OCI-LY7 (cell line): ENCODE measurements at regions of chr2 and their contacts with region 1.

Region 1: DNA sequence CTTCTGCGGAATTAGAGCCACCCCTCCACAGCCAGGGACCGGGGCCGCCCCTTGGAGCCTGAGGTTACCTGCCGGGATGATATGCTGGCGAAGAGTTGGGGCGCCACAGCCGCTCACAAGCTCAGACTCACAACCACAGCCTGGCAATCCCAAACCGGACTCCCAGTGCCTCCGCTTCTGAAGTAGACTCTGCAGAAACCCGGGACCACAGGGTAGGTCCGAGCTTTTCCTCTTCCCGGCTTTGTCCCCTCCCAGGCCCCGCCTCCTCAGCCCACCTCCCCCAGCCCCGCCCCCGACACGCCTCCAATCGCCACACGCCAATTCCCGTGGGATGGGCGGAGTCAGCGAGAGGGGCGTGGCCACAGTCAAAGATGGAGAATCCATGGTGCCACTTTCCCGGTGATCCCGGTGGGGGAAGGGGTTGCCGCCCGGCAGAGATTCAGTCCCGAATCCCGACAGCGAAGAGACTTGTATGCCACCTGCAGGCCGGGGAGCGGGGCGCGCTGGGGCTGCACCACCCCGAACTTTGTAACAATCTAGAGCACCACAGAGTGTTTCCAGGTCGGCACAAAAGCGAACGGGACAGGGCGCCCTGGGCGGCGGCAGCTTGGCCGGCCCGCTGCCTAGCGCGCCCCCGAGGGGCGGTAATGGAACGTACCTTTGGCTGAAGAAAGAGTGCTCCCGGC is at the start of gene IDH1:
- DNase-seq: peak; percentile 91
- H3K4me3 ChIP-seq: peak within 1 kb of the TSS; percentile 77
- H3K27ac ChIP-seq: peak within 1 kb of the TSS; percentile 65
- H3K4me1 ChIP-seq: peaks cover 38% of the 10 kb centered on the region
- CTCF ChIP-seq: peak; percentile 81
- total RNA-seq, gene IDH1: 28.2 and 36.2 TPM in 2 replicates

Region 2: DNA sequence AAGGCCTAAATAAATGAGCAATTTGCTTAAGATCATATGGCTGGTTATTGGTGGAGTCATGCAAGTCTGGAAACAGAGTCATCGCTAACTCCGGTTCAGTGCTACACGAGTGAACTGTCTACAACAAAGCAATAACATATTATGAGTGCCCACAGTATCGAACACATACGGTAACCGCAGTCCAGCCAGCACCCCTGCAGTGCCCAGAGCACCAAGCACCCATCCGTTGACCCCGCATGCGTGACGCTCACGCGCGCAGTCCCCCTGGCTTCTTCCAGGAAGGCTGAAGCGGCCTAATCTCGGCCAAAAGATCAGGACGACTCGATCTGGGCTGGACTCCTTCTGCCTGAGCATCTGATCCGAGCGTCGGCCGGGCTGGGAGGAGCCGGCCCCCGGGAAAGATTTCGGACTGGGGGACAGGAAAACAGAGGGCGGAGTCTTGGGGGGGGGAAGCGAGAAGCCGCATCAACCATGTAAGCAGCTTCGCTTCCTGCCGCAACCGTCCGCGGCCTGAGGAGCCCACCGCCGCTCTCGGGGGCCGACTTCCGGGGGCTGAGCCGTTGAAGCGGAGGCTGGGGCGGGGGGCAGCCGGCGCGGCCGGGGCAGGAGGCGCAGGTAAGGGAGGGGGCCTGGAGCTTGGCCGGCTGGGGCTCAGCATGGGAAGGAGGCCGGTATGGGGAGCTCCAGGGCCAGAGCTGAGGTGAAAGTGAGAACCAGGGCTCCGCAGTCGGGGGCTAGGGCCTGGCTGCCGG is 11.0 kb after region 1 on chr2 and contains the start of gene PIKFYVE:
- CTCF ChIA-PET with region 1: interaction called, 17 read pairs
- POLR2A ChIA-PET with region 1: interaction called, 44 read pairs
- intact Hi-C with region 1: loop called (anchors 1 kb)
- DNase-seq: peak; percentile 98
- H3K4me3 ChIP-seq: peak within 1 kb of the TSS; percentile 74
- H3K27ac ChIP-seq: peak within 1 kb of the TSS; percentile 93
- H3K4me1 ChIP-seq: peaks cover 37% of the 10 kb centered on the region
- CTCF ChIP-seq: no peak
- total RNA-seq, gene PIKFYVE: 29.2 and 29.7 TPM in 2 replicates